ENCODE measurements at regions of chr11 and their contacts with region 1.

Region 1: DNA sequence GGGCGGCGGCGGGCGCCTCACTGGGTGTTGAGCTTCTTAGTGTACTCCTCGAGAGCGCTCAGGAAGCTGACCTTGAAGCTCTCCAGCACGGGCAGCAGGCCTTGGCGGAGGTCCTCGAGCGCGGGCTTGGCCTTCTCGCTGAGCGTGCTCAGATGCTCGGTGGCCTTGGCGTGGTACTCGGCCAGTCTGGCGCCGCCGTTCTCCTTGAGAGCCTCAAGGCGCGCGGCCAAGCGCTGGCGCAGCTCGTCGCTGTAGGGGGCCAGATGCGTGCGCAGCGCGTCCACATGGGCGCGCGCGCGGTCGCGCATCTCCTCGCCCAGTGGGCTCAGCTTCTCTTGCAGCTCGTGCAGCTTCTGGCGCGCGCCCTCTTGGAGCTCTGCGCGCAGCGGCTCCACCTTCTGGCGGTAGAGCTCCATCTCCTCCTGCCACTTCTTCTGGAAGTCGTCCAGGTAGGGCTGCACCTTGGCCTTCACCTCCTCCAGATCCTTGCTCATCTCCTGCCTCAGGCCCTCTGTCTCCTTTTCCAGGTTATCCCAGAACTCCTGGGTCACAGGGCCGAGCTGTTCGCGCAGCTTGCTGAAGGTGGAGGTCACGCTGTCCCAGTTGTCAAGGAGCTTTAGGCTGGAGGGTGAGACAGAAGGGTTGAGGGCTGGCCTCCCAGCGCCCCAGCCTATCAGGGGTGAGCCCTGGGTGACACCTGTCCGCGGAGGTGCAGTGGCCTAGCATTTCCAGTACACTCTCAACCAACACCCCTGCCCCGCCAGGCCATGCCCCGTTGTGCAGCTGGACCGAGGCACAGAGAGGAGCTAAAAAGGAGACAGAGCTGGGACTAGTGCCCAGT is 1.4 kb downstream of the APOA1 start:
- DNase-seq: peak; percentile 65 to 92 (median 82)
- ATAC-seq: peak; percentile 97
- H3K4me3 ChIP-seq: peak overlapping the region; percentile 63 to 64
- H3K4me3 Mint-ChIP-seq: peak overlapping the region; percentile 84
- H3K27ac ChIP-seq: peak overlapping the region; percentile 57 to 63
- H3K27ac Mint-ChIP-seq: peak overlapping the region; percentile 70
- H3K4me1 ChIP-seq: peaks cover 16% of the 10 kb centered on the region
- H3K4me1 Mint-ChIP-seq: peaks cover 14% of the 10 kb centered on the region
- H3K27me3 ChIP-seq: no peaks in the 10 kb centered on the region
- H3K27me3 Mint-ChIP-seq: no peaks in the 10 kb centered on the region
- CTCF ChIP-seq: peak; percentile 54

Region 2: GRCh38 chr11:115630214-115630613 is 1205.8 kb before region 1 on chr11:
- CTCF ChIA-PET with region 1: no interaction called
- POLR2A ChIA-PET with region 1: no interaction called
- intact Hi-C with region 1: no loop called
- DNase-seq: no peak
- ATAC-seq: no peak
- H3K4me3 ChIP-seq: no peak overlapping the region
- H3K4me3 Mint-ChIP-seq: no peak overlapping the region
- H3K27ac ChIP-seq: no peak overlapping the region
- H3K27ac Mint-ChIP-seq: no peak overlapping the region
- H3K4me1 ChIP-seq: no peaks in the 10 kb centered on the region
- H3K4me1 Mint-ChIP-seq: no peaks in the 10 kb centered on the region
- H3K27me3 ChIP-seq: no peaks in the 10 kb centered on the region
- H3K27me3 Mint-ChIP-seq: peaks cover 5% of the 10 kb centered on the region
- CTCF ChIP-seq: no peak

Region 3: GRCh38 chr11:116732271-116733042 is 103.6 kb before region 1 on chr11:
- CTCF ChIA-PET with region 1: interaction called, 11 read pairs
- POLR2A ChIA-PET with region 1: no interaction called
- intact Hi-C with region 1: loop called in 1 of 2 experiments (anchors 5 kb)
- DNase-seq: peak; percentile 22 to 71 (median 55)
- ATAC-seq: peak; percentile 93
- H3K4me3 ChIP-seq: no peak overlapping the region
- H3K4me3 Mint-ChIP-seq: no peak overlapping the region
- H3K27ac ChIP-seq: no peak overlapping the region
- H3K27ac Mint-ChIP-seq: no peak overlapping the region
- H3K4me1 ChIP-seq: no peaks in the 10 kb centered on the region
- H3K4me1 Mint-ChIP-seq: peaks cover 10% of the 10 kb centered on the region
- H3K27me3 ChIP-seq: no peaks in the 10 kb centered on the region
- H3K27me3 Mint-ChIP-seq: peaks cover 3% of the 10 kb centered on the region
- CTCF ChIP-seq: peak; percentile 79

Region 4: DNA sequence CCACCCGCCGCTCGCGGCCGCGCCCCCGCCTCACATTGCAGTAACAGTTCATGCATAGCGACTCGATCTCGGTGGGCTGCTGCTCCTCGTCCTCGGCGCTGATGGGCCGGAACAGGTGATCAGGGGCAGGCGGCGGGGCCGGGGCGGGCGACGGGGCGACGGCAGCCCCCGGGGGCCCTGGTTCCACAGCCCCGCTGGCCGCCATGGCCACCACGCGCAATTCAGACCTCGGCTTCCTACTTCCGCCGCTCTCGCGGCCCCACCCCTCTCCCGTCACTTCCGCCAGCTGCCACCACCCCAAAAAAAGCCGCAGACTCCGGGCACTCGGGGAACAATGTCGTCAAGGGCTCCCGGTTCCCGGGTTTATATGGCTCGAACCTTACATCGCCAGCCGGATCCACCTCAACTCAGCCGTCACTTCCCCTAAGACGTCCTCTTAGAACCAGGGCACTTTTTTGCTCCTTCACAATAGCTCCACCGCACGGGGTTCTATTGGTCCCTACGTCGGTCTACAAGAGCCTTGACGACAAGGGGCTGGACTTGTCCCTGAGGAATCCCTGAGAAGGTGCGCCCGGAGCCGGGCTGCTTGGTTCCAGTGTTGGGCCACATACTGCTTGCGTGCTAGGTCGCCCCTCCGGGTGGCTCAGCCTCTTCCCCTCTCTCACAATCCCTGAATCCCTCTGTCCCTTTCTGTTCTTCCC is 48.1 kb before region 1 on chr11 and contains the start of gene ZPR1:
- CTCF ChIA-PET with region 1: interaction called, 117 read pairs
- POLR2A ChIA-PET with region 1: interaction called, 31 read pairs
- intact Hi-C with region 1: loop called (anchors 1 kb)
- DNase-seq: peak; percentile 69 to 91 (median 87)
- ATAC-seq: peak; percentile 80
- H3K4me3 ChIP-seq: peak within 1 kb of the TSS; percentile 60 to 94
- H3K4me3 Mint-ChIP-seq: peak within 1 kb of the TSS; percentile 95
- H3K27ac ChIP-seq: peak within 1 kb of the TSS; percentile 80 to 95
- H3K27ac Mint-ChIP-seq: peak within 1 kb of the TSS; percentile 91
- H3K4me1 ChIP-seq: peaks cover 29% of the 10 kb centered on the region
- H3K4me1 Mint-ChIP-seq: peaks cover 54% of the 10 kb centered on the region
- H3K27me3 ChIP-seq: no peaks in the 10 kb centered on the region
- H3K27me3 Mint-ChIP-seq: no peaks in the 10 kb centered on the region
- CTCF ChIP-seq: no peak
- total RNA-seq, gene ZPR1: 132 to 134 TPM

Region 5: DNA sequence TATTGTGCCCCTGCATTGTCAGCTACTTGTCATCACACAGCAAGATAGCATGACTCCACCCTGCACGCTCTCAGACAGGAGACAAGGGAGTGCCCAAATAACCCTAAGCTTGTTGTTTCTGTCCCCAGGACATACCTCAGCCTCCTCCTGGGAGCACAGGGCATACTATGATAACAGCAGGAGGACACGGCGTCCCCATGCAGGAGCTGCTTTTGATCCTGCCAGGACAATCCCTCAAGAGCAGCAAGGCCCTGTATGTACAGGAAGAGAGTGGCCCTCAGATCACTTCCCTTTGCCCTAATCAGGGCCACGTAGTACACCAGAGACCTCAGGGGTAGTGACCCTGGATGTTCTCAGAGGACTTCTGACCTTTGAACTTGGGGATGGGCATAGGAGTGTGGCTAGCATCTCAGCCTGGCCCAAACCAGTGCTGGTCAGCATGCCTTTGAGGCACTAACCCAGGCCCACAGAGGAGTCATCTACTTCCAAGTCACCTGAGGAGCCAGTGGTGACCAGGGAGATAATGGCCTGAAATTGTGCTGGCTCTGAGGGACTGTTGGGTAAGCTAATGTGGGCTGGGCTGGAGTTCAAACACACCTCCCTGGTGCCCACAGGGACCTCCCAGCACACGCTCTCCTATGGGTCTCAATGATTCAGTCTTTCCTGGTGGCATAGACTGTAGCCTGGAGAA is 22.1 kb before region 1 on chr11:
- CTCF ChIA-PET with region 1: interaction called, 12 read pairs
- POLR2A ChIA-PET with region 1: no interaction called
- intact Hi-C with region 1: no loop called
- DNase-seq: no peak
- ATAC-seq: no peak
- H3K4me3 ChIP-seq: no peak overlapping the region
- H3K4me3 Mint-ChIP-seq: no peak overlapping the region
- H3K27ac ChIP-seq: no peak overlapping the region
- H3K27ac Mint-ChIP-seq: no peak overlapping the region
- H3K4me1 ChIP-seq: no peaks in the 10 kb centered on the region
- H3K4me1 Mint-ChIP-seq: no peaks in the 10 kb centered on the region
- H3K27me3 ChIP-seq: no peaks in the 10 kb centered on the region
- H3K27me3 Mint-ChIP-seq: no peaks in the 10 kb centered on the region
- CTCF ChIP-seq: no peak

Region 6: DNA sequence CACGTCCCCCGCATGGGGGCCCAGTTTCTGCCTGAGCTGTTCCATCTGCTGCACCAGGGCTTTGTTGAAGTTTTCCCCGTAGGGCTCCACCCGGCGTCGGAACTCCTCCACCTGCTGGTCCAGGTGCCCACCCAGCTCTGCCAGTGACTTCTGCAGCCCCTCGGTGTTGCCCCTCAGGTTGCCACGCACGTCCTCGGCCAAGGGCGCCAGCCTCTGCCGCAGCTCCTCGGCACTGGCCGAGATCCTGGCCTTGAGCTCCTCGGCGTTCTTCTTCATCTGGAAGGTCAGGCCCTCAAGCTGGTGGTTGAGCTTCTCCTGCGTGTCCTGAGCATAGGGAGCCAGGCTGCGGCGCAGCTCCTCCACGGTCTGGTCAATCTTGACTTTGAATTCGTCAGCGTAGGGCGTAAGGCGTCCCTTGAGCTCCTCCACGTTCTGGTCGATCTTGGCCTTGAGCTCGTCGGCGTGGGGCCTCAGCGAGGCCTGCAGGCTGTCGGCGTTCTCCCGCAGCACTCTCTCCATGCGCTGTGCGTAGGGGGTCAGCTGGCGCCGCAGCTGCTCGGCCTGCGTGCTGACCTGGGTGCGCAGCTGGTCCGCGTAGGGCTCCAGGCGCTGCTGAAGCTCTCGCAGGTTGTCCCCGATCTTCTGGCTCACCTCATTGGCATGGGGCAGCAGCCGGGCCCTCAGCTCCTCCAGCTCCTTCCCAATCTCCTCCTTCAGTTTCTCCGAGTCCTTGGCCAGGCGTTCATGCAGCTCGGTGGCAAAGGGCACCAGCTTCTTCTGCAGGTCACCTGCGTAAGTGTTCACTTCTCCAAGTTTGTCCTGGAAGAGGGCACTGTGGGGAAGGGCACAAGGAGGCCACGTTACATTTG is 14.7 kb before region 1 on chr11:
- CTCF ChIA-PET with region 1: interaction called, 14 read pairs
- POLR2A ChIA-PET with region 1: interaction called, 4 read pairs
- intact Hi-C with region 1: no loop called
- DNase-seq: no peak
- ATAC-seq: no peak
- H3K4me3 ChIP-seq: no peak overlapping the region
- H3K4me3 Mint-ChIP-seq: no peak overlapping the region
- H3K27ac ChIP-seq: no peak overlapping the region
- H3K27ac Mint-ChIP-seq: no peak overlapping the region
- H3K4me1 ChIP-seq: no peaks in the 10 kb centered on the region
- H3K4me1 Mint-ChIP-seq: no peaks in the 10 kb centered on the region
- H3K27me3 ChIP-seq: no peaks in the 10 kb centered on the region
- H3K27me3 Mint-ChIP-seq: no peaks in the 10 kb centered on the region
- CTCF ChIP-seq: no peak